HEK293T (cell line): ENCODE measurements at regions of chr5 and their contacts with region 1.

Region 1: GRCh38 chr5:14871210-14872069 is at the start of gene ANKH:
- DNase-seq: peak; percentile 82

Region 2: DNA sequence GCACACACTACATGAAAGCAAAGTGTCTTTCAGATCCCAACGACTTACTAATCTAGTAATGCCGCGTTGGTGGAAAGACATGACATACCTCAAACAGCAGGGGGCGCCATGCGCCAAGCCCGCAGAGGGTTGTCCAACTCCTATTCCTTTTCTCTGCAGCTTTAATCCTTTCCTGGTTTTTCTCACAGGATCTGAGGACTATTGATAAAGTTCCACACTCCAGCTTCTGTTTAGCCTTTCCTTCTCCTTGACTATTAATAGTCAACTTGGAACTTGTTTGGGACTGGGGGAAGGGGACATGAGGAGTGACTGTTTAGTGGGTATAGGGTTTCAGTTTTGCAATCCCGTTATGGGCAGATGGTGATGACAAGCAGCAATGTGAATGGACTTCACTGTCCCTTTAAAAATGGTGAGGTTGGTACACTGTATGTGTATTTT is 144.0 kb before region 1 on chr5:
- CTCF ChIA-PET with region 1: interaction called, 11 read pairs
- POLR2A ChIA-PET with region 1: no interaction called
- DNase-seq: peak; percentile 80

Region 3: DNA sequence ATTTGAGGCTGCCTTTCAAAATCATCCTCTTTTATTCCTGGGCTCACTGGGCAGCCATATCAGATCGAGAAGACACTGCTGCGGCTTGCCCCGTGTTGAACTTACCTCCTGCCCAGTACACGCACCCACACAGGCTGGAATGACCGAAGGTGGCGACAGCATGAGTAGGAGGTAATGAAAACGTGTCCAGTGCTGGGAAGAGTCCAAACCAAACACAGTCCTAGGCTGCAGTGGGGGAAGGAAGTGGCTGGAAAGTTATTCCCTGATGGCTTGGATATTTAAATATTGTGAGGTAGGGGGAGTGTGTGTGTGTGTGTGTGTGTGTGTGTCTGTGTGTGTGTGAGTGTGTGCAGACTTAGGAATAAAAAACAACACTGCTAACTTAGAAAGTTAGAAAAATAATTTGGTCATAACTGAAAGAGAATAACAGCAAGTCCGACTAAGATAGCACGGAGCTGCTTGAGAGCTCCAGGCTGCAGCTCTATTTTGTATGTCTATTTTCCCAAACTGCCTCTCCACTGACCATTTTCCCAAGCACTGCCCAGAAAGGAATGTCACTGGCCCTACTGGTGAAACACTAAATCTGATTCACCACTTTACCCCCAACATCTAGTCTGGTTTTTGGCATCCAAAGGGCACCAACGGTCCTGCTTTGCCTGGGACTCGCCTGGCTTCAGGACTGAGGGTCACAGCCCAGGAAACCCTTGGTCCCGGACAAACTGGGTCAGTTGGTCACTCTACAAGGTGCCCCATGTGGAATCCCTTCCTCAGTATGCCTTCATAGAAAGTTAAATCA is 41.0 kb before region 1 on chr5:
- CTCF ChIA-PET with region 1: no interaction called
- POLR2A ChIA-PET with region 1: no interaction called
- DNase-seq: no peak

Region 4: DNA sequence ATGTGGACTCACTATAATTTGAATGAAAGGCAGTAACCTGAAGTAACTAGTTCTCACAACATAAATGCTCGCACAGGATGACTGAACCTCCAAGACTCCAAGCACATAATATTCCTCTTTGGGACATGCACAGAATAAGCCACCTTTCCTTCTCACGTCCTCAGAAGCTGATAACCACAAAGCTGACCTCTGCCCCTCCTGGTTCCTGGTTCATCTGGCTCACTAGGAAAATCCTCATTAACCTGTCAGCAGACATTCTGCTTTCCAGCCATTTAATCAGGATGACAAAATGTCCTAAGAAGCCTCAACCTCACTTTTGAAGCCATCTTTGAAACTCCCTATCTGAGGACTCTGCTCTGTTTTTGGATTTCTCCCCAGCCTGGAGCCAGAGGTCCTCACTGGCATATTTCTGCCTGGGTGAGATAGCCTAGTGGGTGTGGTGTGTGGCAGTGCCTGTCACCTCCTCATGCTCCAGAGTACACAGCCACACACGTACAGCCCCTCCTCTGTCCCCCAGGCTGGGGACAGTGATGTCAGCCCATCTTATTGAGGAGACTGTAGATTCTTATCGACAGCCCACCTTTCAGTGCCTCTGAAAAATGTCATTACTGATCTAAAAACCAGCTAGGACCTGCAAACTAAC is 10.2 kb before region 1 on chr5:
- CTCF ChIA-PET with region 1: interaction called, 10 read pairs
- POLR2A ChIA-PET with region 1: interaction called, 3 read pairs
- DNase-seq: no peak